ENCODE measurements at regions of chr21 and their contacts with region 1.

Region 1: DNA sequence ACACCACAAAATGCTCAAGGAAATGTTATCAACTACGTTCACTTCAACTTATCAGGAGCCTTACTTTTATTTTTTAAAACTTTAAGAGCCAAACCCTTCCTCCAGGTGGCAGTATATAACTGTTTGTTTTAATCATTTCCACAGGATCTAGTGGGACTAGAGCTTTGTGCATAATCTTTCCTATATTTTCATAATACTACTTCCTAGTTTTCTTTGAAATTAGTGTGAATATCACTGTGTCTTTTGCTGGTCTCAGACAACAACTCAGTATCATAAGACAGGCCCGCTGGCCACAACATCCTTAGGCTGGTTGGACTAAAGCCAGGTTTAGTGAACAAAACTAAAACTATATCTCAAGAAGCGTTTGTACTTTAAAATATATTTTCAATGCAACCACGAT is 145.5 kb downstream of the TIAM1 start:
- DNase-seq: peak; percentile 38
- H3K4me3 ChIP-seq: no peak overlapping the region
- H3K27ac ChIP-seq: no peak overlapping the region
- H3K4me1 ChIP-seq: peaks cover 4% of the 10 kb centered on the region
- H3K27me3 ChIP-seq: no peaks in the 10 kb centered on the region
- CTCF ChIP-seq: peak; percentile 48 to 56

Region 2: DNA sequence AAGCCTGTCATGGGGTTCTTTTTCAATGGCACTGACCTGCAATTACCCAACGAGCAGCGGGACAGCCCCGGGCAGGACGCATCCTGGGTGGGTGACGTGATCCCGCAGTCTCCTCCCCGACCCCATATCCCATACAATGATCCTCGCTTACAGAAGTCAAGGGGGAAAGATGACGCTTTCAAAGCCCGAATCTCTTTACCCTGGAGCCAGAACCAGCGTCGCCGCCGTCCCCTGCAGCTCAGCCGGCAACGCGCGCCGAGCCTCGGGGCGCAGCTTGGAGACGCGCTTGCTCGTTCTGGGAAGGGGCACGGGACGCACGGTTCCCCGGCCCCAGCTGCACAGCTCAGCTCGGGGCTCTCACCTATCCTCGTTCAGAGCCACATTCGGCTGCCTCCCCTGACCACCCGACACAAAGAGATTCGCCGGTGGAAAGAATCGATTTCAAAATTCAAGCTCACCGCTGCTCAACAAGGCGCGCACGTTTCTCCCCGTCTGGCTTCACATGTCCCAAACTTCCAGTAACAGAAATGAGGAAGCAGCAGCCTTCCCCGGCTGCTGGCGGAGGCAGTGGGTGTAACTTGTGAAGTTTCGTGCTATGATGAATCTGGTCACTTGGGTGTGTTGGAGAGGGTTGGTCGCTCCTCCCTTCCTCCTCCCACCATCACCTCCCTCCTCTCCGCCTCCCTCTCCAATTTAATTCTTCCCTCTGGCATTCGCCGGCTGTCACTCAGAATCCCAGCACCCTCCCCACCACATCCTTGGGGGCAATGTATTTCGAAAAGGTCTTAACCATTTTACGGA is 145.3 kb after region 1 on chr21 and contains the start of gene TIAM1:
- CTCF ChIA-PET with region 1: interaction called, 3 read pairs
- dilution Hi-C with region 1: no loop called
- in situ Hi-C with region 1: loop called in 1 of 2 experiments (anchors 10 kb)
- intact Hi-C with region 1: loop called (anchors 1 kb)
- DNase-seq: peak; percentile 89
- H3K4me3 ChIP-seq: peak within 1 kb of the TSS; percentile 75 to 81 (median 77)
- H3K27ac ChIP-seq: peak within 1 kb of the TSS; percentile 58
- H3K4me1 ChIP-seq: peaks cover 10% of the 10 kb centered on the region
- H3K27me3 ChIP-seq: no peaks in the 10 kb centered on the region
- CTCF ChIP-seq: no peak
- total RNA-seq, gene TIAM1: 14.7 to 27.7 TPM

Region 3: DNA sequence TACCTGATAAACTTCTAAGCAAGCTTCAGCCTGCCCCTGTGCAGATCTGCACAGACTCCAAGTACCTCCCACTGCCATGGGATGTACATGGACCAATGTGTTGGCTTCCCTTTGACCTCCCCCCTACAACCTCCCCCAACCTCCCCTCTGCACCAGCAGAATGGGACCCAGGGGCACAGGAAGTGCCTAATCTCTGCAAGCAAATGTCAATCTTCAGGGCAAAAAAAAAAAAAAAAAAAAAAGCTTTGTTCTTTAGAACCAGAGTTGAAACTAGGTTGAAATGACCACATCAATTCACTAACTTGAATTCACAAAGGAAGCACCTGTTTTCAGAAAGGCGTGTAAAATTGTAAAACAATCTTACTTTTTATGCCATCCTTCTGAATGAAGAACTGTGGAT is 199.4 kb after region 1 on chr21:
- CTCF ChIA-PET with region 1: no interaction called
- dilution Hi-C with region 1: no loop called
- in situ Hi-C with region 1: no loop called
- intact Hi-C with region 1: no loop called
- DNase-seq: no peak
- H3K4me3 ChIP-seq: no peak overlapping the region
- H3K27ac ChIP-seq: no peak overlapping the region
- H3K4me1 ChIP-seq: no peaks in the 10 kb centered on the region
- H3K27me3 ChIP-seq: no peaks in the 10 kb centered on the region
- CTCF ChIP-seq: no peak

Region 4: DNA sequence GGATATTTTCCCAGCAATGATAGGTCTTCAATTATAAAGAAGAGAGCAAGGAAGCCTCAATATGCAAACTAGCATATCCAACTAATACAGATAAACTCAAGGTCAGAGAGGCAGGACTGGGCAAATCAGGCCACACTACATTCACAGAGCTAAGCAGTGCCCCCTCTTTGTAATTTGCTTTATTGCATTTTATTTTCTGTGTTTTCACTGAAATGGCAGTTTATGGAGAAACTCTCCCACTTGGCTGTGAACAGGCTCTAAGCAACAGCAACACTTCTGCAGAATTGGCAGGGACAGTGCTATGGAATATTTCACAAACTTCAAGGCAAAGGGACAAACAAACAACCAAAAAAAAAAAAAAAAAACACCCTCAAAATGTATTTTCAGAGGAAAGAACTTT is 367.5 kb after region 1 on chr21:
- CTCF ChIA-PET with region 1: interaction called, 13 read pairs
- dilution Hi-C with region 1: loop called (anchors 5 kb)
- in situ Hi-C with region 1: no loop called
- intact Hi-C with region 1: no loop called
- DNase-seq: no peak
- H3K4me3 ChIP-seq: no peak overlapping the region
- H3K27ac ChIP-seq: no peak overlapping the region
- H3K4me1 ChIP-seq: no peaks in the 10 kb centered on the region
- H3K27me3 ChIP-seq: no peaks in the 10 kb centered on the region
- CTCF ChIP-seq: peak in 1 of 2 donors; percentile 12

Region 5: DNA sequence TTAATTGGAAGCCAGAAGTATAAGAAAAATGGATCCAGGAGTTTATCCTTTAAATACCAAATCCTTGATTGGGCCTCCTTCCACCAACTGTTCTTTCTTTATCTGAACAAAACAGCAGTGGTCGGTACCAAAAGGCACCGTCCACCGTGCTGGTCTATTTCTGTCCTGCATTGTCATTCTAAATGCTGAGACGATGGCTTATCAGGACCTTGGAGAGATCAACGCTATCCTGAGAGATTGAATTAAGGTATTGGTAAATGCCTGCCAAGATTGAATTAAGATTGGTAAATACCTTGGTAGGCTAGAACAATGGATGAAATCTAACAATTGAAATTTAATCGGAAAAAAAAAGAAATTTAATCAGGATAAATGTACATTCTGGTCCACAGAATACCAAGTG is 387.5 kb after region 1 on chr21:
- CTCF ChIA-PET with region 1: interaction called, 11 read pairs
- dilution Hi-C with region 1: no loop called
- in situ Hi-C with region 1: loop called (anchors 5 kb)
- intact Hi-C with region 1: no loop called
- DNase-seq: no peak
- H3K4me3 ChIP-seq: no peak overlapping the region
- H3K27ac ChIP-seq: no peak overlapping the region
- H3K4me1 ChIP-seq: no peaks in the 10 kb centered on the region
- H3K27me3 ChIP-seq: peaks cover 1% of the 10 kb centered on the region
- CTCF ChIP-seq: no peak

Region 6: GRCh38 chr21:31604591-31605190 is 406.1 kb after region 1 on chr21:
- CTCF ChIA-PET with region 1: no interaction called
- dilution Hi-C with region 1: no loop called
- in situ Hi-C with region 1: no loop called
- intact Hi-C with region 1: loop called (anchors 1 kb)
- DNase-seq: peak; percentile 41
- H3K4me3 ChIP-seq: no peak overlapping the region
- H3K27ac ChIP-seq: no peak overlapping the region
- H3K4me1 ChIP-seq: peaks cover 7% of the 10 kb centered on the region
- H3K27me3 ChIP-seq: no peaks in the 10 kb centered on the region
- CTCF ChIP-seq: peak; percentile 78 to 91